ENCODE measurements at regions of chr5 and their contacts with region 1.

Region 1: DNA sequence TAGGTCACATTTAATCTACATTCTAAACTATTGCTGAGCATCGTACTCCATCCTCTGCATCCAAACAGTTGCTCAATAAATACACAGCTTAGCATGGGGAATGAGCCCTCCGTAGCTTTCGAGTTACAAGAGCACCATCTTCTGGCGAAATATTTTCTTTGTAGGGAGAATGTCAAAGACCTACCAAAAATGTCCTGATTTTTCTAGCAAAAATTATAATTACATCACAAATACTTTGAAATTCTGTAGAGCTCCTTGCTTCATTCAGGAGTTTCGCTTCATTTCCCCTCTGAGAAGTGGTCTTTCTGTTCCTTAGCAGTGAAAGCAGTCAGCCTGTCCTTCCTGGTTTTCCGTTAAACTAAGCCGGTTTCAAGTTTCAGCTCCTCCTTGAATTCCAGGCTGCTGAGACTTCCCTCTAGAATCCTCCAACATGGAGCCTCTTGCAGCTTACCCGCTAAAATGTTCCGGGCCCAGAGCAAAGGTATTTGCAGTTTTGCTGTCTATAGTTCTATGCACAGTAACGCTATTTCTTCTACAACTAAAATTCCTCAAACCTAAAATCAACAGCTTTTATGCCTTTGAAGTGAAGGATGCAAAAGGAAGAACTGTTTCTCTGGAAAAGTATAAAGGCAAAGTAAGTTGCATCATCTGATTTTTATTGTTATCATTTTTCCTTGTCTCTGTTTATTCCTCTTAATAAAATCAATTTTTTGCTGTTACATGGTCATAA is at the start of gene GPX8:
- DNase-seq: peak; percentile 75 to 94
- H3K4me3 ChIP-seq: peak within 1 kb of the TSS; percentile 45
- H3K4me1 ChIP-seq: peaks cover 3% of the 10 kb centered on the region; the same call in 1 of the 2 replicates
- H3K27me3 ChIP-seq: peaks cover 5% of the 10 kb centered on the region

Region 2: DNA sequence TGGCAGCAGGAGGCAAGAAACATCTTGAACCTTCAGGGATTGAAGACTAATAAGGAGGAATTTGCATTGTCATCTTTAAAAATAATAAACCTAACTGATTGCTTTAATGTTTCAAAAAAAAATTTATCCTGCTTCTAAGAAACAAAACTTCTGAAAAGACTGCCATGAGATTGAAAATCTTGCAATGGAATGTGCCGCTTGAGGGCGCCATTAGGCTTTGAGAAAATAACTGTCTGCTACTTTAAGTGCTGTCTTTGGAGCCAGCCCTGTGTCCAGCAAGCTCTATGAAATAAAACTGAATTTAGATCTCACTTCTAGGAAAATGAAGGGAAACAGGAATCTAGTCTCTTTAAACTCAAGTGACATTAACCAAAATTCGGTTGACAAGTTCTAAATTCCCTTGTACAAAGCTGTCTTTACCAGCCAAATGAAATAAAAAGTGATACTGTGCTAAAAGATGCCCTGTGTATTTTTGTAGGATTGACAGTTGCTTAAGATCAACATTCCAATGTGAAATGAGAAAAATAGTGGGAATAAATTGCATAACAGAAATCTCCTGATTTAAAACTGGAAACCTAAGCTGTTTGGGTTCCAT is 253.9 kb before region 1 on chr5:
- in situ Hi-C with region 1: loop called (anchors 10 kb)
- DNase-seq: peak; percentile 48 to 73
- H3K4me3 ChIP-seq: no peak overlapping the region
- H3K4me1 ChIP-seq: no peaks in the 10 kb centered on the region
- H3K27me3 ChIP-seq: peaks cover 9% of the 10 kb centered on the region

Measured in HAP-1 (cell line).